ENCODE measurements at regions of chr14 and their contacts with region 1.

Region 1: GRCh38 chr14:101843665-101844064 is 82.2 kb downstream of the PPP2R5C start:
- DNase-seq: no peak
- H3K4me3 ChIP-seq: no peak overlapping the region
- H3K27ac ChIP-seq: no peak overlapping the region
- H3K4me1 ChIP-seq: peaks cover 12 to 37% of the 10 kb centered on the region in 2 donors
- H3K27me3 ChIP-seq: no peaks in the 10 kb centered on the region
- CTCF ChIP-seq: peak in 1 of 6 experiments; percentile 16
- POLR2A ChIP-seq: no peak

Region 2: GRCh38 chr14:101791919-101792572 is 51.6 kb before region 1 on chr14:
- intact Hi-C with region 1: loop called (anchors 10 kb)
- DNase-seq: no peak
- H3K4me3 ChIP-seq: no peak overlapping the region
- H3K27ac ChIP-seq: no peak overlapping the region
- H3K4me1 ChIP-seq: no peaks in the 10 kb centered on the region
- H3K27me3 ChIP-seq: no peaks in the 10 kb centered on the region
- CTCF ChIP-seq: no peak
- POLR2A ChIP-seq: no peak

Region 3: GRCh38 chr14:102891556-102891955 is 1047.9 kb after region 1 on chr14:
- intact Hi-C with region 1: no loop called
- DNase-seq: no peak
- H3K4me3 ChIP-seq: no peak overlapping the region
- H3K27ac ChIP-seq: no peak overlapping the region
- H3K4me1 ChIP-seq: peaks cover 0 to under 1% of the 10 kb centered on the region in 2 donors
- H3K27me3 ChIP-seq: no peaks in the 10 kb centered on the region
- CTCF ChIP-seq: no peak
- POLR2A ChIP-seq: no peak